Activated CD8-positive, alpha-beta T cell treated with anti-CD3 and anti-CD28 coated beads for 36 hours (primary cell): ENCODE measurements at regions of chr22 and their contacts with region 1.

Region 1: DNA sequence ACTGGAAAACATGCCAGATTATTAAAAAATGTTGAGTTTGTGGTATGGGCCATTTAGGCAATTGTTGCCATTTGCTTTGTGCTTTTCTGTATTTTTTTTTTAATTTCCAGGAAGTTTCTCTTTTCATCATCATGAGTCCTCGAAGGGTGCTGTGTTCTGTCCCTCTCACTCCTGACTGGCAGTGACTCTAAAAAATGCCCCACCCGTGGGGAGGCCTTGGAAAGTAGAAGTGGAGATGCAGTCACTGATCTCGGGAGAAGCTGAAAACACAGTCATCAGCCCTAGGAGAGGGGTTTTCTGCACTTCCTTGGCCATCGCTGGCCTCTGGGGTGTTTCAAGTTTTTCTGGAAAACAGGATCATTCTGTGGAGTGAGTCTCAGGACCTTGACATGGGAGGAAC is 98.5 kb upstream of the GRK3 start:
- DNase-seq: no peak
- ATAC-seq: no peak
- H3K4me3 Mint-ChIP-seq: no peak overlapping the region
- H3K27ac Mint-ChIP-seq: peak overlapping the region; percentile 64
- H3K4me1 Mint-ChIP-seq: no peaks in the 10 kb centered on the region
- H3K27me3 Mint-ChIP-seq: no peaks in the 10 kb centered on the region
- CTCF ChIP-seq: no peak

Region 2: GRCh38 chr22:25702040-25702439 is 236.1 kb after region 1 on chr22:
- CTCF ChIA-PET with region 1: interaction called, 4 read pairs
- POLR2A ChIA-PET with region 1: no interaction called
- intact Hi-C with region 1: loop called (anchors 10 kb)
- DNase-seq: no peak
- ATAC-seq: no peak
- H3K4me3 Mint-ChIP-seq: no peak overlapping the region
- H3K27ac Mint-ChIP-seq: no peak overlapping the region
- H3K4me1 Mint-ChIP-seq: peaks cover 15% of the 10 kb centered on the region
- H3K27me3 Mint-ChIP-seq: no peaks in the 10 kb centered on the region
- CTCF ChIP-seq: peak; percentile 38